CD14-positive monocyte (primary cell): ENCODE measurements at regions of chr11 and their contacts with region 1.

Region 1: DNA sequence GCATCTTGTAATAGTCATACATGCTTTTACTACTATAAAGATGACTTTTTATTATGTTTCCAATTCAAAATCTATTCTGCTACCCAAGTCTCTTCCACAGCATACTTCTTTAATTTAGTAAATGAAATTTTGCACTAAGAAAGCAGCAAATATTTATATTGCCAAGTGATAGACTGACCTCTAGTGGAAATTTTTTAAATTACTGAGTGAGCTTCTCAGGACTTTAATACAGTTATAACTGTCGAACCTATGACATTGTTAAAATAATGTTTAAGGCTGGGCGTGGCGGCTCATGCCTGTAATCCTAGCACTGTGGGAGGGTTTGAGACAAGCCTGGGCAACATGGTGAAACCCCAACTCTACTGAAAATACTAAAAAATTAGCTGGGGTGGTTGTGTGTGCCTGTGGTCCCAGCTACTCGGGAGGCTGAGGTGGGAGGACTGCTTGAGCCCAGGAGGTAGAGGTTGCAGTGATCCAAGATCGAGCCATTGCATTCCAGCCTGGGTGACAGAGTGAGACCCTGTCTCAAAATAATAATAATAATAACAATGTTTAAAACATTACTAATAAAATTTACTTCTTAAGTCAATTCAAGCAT is 27.3 kb downstream of the STK33 start:
- DNase-seq: peak; percentile 3 to 60 (median 25)
- H3K4me3 ChIP-seq: no peak overlapping the region
- H3K4me3 Mint-ChIP-seq: no peak overlapping the region
- H3K27ac ChIP-seq: no peak overlapping the region
- H3K27ac Mint-ChIP-seq: no peak overlapping the region
- H3K4me1 ChIP-seq: no peaks in the 10 kb centered on the region
- H3K4me1 Mint-ChIP-seq: no peaks in the 10 kb centered on the region
- H3K27me3 ChIP-seq: peaks cover 0 to 3% of the 10 kb centered on the region in 2 donors
- H3K27me3 Mint-ChIP-seq: no peaks in the 10 kb centered on the region
- CTCF ChIP-seq: peak; percentile 77

Region 2: GRCh38 chr11:8192016-8192895 is 374.5 kb before region 1 on chr11:
- intact Hi-C with region 1: loop called in 1 of 2 experiments (anchors 5 kb)
- DNase-seq: peak; percentile 51 to 67 (median 65)
- H3K4me3 ChIP-seq: no peak overlapping the region
- H3K4me3 Mint-ChIP-seq: no peak overlapping the region
- H3K27ac ChIP-seq: no peak overlapping the region
- H3K27ac Mint-ChIP-seq: peak overlapping the region in 1 of 7 donors; percentile 62
- H3K4me1 ChIP-seq: peaks cover 38% of the 10 kb centered on the region in 2 donors
- H3K4me1 Mint-ChIP-seq: peaks cover 38% of the 10 kb centered on the region
- H3K27me3 ChIP-seq: no peaks in the 10 kb centered on the region
- H3K27me3 Mint-ChIP-seq: peaks cover 1 to 2% (median 2%) of the 10 kb centered on the region in 3 donors
- CTCF ChIP-seq: peak; percentile 88

Region 3: GRCh38 chr11:8225589-8226036 is 341.1 kb before region 1 on chr11:
- intact Hi-C with region 1: loop called (anchors 2 kb)
- DNase-seq: peak; percentile 44 to 66 (median 66)
- H3K4me3 ChIP-seq: no peak overlapping the region
- H3K4me3 Mint-ChIP-seq: no peak overlapping the region
- H3K27ac ChIP-seq: no peak overlapping the region
- H3K27ac Mint-ChIP-seq: peak overlapping the region in 1 of 7 donors; percentile 21
- H3K4me1 ChIP-seq: peaks cover 4 to 13% of the 10 kb centered on the region in 2 donors
- H3K4me1 Mint-ChIP-seq: peaks cover 21% of the 10 kb centered on the region
- H3K27me3 ChIP-seq: no peaks in the 10 kb centered on the region
- H3K27me3 Mint-ChIP-seq: peaks cover 9 to 19% (median 11%) of the 10 kb centered on the region in 3 donors
- CTCF ChIP-seq: peak; percentile 99

Region 4: DNA sequence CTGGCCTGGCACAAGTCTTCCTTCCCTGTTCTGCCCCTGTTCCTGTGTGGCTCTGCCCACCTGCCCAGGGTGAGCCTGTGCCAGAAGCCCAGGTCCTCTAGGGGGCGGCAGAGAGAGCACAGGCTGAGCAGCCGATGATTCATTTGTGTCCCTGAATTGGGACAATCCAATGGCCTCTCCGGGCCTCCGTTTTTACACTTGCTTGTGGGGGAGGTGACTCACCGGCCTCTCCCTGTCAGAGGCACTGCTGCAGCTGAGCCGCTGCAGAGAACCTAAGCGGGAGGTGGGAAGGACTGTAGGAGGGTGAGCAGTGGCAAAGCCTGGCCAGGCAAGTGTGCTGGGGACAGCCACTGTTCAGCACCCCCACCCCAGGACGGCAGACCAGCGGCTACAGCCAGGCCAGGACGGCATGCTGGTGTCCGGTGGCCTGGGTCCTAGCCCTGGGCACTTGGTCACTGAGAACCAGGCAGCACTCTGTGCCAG is 237.8 kb before region 1 on chr11:
- intact Hi-C with region 1: loop called in 1 of 2 experiments (anchors 10 kb)
- DNase-seq: peak; percentile 89 to 97 (median 94)
- H3K4me3 ChIP-seq: peak overlapping the region in 1 of 3 experiments; percentile 26
- H3K4me3 Mint-ChIP-seq: peak overlapping the region in 1 of 2 donors; percentile 55
- H3K27ac ChIP-seq: peak overlapping the region; percentile 76 to 81
- H3K27ac Mint-ChIP-seq: peak overlapping the region; percentile 84 to 94 (median 91)
- H3K4me1 ChIP-seq: peaks cover 46 to 58% of the 10 kb centered on the region in 2 donors
- H3K4me1 Mint-ChIP-seq: peaks cover 43% of the 10 kb centered on the region
- H3K27me3 ChIP-seq: no peaks in the 10 kb centered on the region
- H3K27me3 Mint-ChIP-seq: peaks cover 0 to 6% (median 3%) of the 10 kb centered on the region in 3 donors
- CTCF ChIP-seq: peak; percentile 97